MCF 10A (cell line): ENCODE measurements at regions of chr15 and their contacts with region 1.

Region 1: GRCh38 chr15:40421246-40422157 is 15.9 kb downstream of the IVD start:
- DNase-seq: peak; percentile 68
- H3K4me3 Mint-ChIP-seq: peak overlapping the region; percentile 14
- H3K27ac Mint-ChIP-seq: peak overlapping the region; percentile 73
- H3K4me1 Mint-ChIP-seq: peaks cover 19% of the 10 kb centered on the region
- H3K27me3 Mint-ChIP-seq: no peaks in the 10 kb centered on the region
- CTCF ChIP-seq: peak; percentile 92

Region 2: GRCh38 chr15:40290918-40291574 is 130.5 kb before region 1 on chr15:
- CTCF ChIA-PET with region 1: interaction called, 14 read pairs
- POLR2A ChIA-PET with region 1: interaction called, 5 read pairs
- intact Hi-C with region 1: no loop called
- DNase-seq: peak; percentile 63
- H3K4me3 Mint-ChIP-seq: peak overlapping the region; percentile 62
- H3K27ac Mint-ChIP-seq: no peak overlapping the region
- H3K4me1 Mint-ChIP-seq: peaks cover 4% of the 10 kb centered on the region
- H3K27me3 Mint-ChIP-seq: peaks cover 10% of the 10 kb centered on the region
- CTCF ChIP-seq: no peak

Region 3: DNA sequence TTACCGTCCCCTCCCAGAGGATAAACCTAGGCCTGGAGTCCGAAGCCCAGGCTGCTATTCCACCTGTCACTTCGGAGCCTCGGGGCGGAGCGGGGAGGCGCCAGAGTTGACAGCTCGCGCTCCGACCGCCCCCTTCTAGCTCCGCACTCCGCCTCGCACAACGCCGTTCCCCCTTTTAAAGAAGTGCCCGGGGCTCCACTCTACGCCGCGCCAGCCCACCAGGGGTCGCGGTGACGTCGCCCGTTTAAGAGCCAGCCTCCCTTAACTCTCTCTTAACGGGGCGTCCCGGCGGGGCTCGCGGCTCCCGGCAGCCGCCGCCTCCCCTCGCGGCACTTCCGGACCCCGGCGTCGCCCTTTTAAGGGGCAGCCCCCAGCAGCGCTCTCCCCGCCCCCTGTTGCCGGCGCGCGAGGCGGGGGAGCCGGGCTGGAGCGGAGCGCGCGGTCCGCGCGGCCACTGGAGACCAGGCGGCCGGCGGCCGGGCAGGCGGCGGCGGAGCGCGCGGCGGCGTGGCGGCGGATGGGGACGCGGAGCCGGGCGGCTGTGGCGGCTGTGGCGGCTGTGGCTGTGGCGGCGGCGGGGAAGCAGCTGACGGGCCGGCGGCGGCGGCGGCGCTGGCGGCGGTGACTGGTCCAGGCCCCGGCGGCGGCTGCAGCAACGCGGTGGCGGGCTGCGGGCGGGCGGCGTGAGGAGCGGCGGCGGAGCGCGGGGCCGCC is 98.1 kb before region 1 on chr15 and contains the start of gene INAFM2:
- CTCF ChIA-PET with region 1: interaction called, 12 read pairs
- POLR2A ChIA-PET with region 1: interaction called, 4 read pairs
- intact Hi-C with region 1: loop called (anchors 2 kb)
- DNase-seq: peak; percentile 89
- H3K4me3 Mint-ChIP-seq: peak within 1 kb of the TSS; percentile 69
- H3K27ac Mint-ChIP-seq: no peak within 1 kb of the TSS
- H3K4me1 Mint-ChIP-seq: peaks cover 30% of the 10 kb centered on the region
- H3K27me3 Mint-ChIP-seq: no peaks in the 10 kb centered on the region
- CTCF ChIP-seq: peak; percentile 32
- total RNA-seq, gene INAFM2: 14.9 and 15.7 TPM in 2 replicates

Region 4: GRCh38 chr15:40344631-40345120 is 76.8 kb before region 1 on chr15:
- CTCF ChIA-PET with region 1: interaction called, 76 read pairs
- POLR2A ChIA-PET with region 1: interaction called, 5 read pairs
- intact Hi-C with region 1: loop called (anchors 1 kb)
- DNase-seq: peak; percentile 73
- H3K4me3 Mint-ChIP-seq: no peak overlapping the region
- H3K27ac Mint-ChIP-seq: no peak overlapping the region
- H3K4me1 Mint-ChIP-seq: peaks cover 40% of the 10 kb centered on the region
- H3K27me3 Mint-ChIP-seq: no peaks in the 10 kb centered on the region
- CTCF ChIP-seq: peak; percentile 83

Region 5: DNA sequence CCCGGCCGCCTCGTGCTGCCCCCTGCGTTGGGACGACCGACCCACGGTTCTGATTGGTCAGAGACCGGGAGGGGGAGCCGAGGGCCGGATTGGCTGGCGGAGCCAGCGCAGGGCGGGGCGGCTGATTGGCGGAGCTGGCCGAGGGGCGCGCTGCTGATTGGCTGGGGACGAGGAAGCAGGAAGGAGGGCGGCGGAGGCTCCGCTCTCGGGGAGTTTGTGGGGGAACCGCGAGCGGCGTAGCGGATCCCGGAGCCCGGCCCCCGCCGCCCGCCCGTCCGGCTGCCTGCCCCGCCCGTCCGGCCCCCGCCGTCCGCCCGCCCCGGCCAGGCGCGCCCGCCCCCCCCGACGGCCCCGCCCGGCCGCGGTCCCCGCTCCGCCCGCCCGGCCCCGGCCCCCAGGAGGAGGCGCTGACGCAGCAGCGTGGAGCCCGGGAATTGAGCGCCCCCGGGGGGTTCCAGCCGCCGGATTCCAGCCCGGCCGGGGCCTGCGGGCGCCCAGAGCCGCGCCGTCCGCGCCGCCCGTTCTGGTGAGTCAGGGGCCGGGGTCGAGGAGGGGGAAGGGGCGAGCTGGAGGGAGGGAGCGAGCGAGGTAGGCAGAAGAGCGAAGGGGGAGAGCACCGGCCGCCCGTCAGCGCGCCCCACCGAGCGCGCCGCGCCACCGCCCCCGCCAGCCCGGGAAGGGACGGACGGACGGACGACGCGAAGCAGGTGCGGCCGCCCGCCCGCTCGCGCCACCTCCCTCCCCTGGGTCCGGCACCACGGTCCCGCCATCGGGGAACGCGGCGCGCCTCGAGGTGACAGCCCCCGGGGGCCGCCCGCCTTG is 19.5 kb after region 1 on chr15 and contains the start of gene BAHD1:
- CTCF ChIA-PET with region 1: interaction called, 5 read pairs
- POLR2A ChIA-PET with region 1: interaction called, 10 read pairs
- intact Hi-C with region 1: no loop called
- DNase-seq: peak; percentile 91
- H3K4me3 Mint-ChIP-seq: peak within 1 kb of the TSS; percentile 89
- H3K27ac Mint-ChIP-seq: peak within 1 kb of the TSS; percentile 70
- H3K4me1 Mint-ChIP-seq: peaks cover 38% of the 10 kb centered on the region
- H3K27me3 Mint-ChIP-seq: peaks cover 7% of the 10 kb centered on the region
- CTCF ChIP-seq: no peak
- total RNA-seq, gene BAHD1: 14.9 and 15.1 TPM in 2 replicates

Region 6: GRCh38 chr15:40618023-40618422 is 196.5 kb after region 1 on chr15:
- CTCF ChIA-PET with region 1: no interaction called
- POLR2A ChIA-PET with region 1: no interaction called
- intact Hi-C with region 1: no loop called
- DNase-seq: no peak
- H3K4me3 Mint-ChIP-seq: no peak overlapping the region
- H3K27ac Mint-ChIP-seq: no peak overlapping the region
- H3K4me1 Mint-ChIP-seq: no peaks in the 10 kb centered on the region
- H3K27me3 Mint-ChIP-seq: no peaks in the 10 kb centered on the region
- CTCF ChIP-seq: no peak